CD8-positive, alpha-beta memory T cell (primary cell): ENCODE measurements at regions of chr12 and their contacts with region 1.

Region 1: DNA sequence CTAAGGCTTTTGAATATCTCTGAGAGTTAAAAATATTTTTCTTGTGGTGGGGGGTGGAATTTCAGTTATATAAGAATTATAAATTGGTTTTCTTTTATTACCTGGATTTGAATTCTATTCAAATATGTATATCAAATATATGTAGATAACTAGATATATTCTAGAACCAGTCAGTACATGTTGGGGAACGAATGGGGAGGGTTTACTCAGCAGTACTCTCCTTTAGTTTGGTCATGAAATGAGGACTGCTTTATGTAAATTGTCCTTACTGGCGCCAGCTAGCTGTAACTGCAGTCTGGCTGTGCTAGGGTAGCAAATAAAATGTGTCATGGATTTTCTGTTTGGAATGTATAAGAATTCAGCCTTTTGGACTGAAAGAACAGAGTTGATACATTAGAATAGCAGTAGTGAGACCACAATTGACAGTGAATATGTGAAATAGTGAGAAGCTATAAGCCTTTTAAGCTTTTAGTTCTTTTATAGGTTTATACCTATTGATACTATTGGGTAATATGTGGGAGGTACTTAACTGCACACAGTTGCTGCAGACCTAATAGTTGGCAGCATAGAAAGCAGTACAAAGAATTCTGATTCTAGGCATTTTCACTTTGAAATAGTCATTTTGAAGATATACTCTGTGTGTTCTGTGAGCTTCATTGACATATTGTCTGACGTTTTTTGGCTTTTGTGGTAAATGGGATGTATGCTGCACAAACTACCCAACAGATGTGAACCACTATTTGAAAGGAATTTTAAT is 29.0 kb downstream of the ATF7IP start:
- DNase-seq: peak in 3 of 5 donors; percentile 64 to 82 (median 78)
- H3K4me3 ChIP-seq: no peak overlapping the region
- H3K4me3 Mint-ChIP-seq: peak overlapping the region; percentile 71 to 91 (median 78)
- H3K27ac ChIP-seq: peak overlapping the region; percentile 29
- H3K27ac Mint-ChIP-seq: peak overlapping the region; percentile 76 to 99 (median 96)
- H3K4me1 ChIP-seq: peaks cover 94% of the 10 kb centered on the region
- H3K4me1 Mint-ChIP-seq: peaks cover 87 to 97% (median 94%) of the 10 kb centered on the region in 3 donors
- H3K27me3 ChIP-seq: no peaks in the 10 kb centered on the region
- H3K27me3 Mint-ChIP-seq: no peaks in the 10 kb centered on the region

Region 2: DNA sequence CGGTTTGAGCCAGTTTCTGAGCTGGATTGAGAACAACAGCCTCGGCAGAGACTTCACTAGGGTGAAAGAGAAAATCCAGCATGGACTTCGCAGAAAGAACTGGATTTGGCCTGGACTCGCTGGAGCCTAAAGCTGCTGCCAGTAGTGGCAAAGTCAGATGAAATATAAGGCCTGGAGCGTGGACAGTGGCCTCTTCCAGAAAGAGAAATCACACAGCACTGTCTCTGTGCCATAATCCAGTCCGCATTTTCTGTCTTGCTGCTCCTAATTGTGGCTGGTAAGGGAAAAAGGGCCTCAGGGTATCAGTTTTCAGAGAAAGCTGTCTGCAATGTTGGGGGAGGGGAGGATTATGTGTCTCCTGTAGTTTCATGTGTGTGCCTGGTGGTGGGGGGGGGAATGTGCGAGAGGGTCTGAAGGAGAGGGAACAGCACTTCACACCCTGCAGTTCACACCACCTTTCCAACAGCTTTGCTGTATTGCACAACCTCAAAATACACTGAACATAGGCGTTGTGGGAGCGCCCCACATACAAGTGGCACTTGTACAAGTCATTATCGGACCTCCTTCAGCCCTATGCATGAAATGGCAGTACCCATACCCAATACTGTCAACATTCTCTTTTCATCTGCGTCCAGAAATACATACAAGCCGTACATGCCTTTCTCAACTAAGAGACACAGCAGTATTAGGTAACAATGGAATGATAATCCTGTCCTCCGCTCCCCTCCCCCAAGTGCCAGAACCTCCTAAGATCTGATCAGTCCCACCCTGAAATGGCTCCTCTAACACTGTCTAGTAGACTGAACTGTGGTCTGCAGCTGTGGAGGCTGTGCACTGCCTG is 136.5 kb before region 1 on chr12:
- CTCF ChIA-PET with region 1: interaction called, 6 read pairs
- POLR2A ChIA-PET with region 1: interaction called, 12 read pairs
- DNase-seq: peak; percentile 69 to 79 (median 78)
- H3K4me3 ChIP-seq: peak overlapping the region; percentile 24
- H3K4me3 Mint-ChIP-seq: peak overlapping the region; percentile 54 to 86 (median 83)
- H3K27ac ChIP-seq: peak overlapping the region; percentile 69
- H3K27ac Mint-ChIP-seq: peak overlapping the region; percentile 81 to 98 (median 96)
- H3K4me1 ChIP-seq: peaks cover 38% of the 10 kb centered on the region
- H3K4me1 Mint-ChIP-seq: peaks cover 44 to 53% (median 49%) of the 10 kb centered on the region in 3 donors
- H3K27me3 ChIP-seq: no peaks in the 10 kb centered on the region
- H3K27me3 Mint-ChIP-seq: peaks cover 0 to 2% of the 10 kb centered on the region in 2 donors

Region 3: DNA sequence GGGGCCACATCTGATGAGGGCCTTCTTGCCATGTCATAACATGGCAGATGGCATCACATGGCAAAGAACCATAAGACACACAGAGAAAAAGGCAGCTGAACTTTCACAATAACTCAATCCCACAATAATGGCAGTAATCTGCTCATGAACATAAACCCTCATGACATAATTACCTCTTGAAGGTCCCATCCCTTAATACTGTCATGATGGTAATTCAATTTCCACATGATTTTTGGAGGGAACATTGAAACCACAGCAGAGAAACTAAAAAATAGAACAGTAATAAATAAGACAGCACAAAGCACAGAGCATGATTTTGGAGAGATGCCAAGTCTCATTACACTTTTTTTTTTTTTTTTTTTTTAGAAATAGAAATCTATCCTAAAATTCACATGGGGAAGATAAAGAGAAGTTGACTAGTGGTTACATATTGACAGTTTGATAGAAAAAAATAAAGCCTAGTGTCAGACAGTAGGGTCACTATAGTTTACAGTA is 90.8 kb before region 1 on chr12:
- CTCF ChIA-PET with region 1: no interaction called
- POLR2A ChIA-PET with region 1: no interaction called
- DNase-seq: no peak
- H3K4me3 ChIP-seq: no peak overlapping the region
- H3K4me3 Mint-ChIP-seq: no peak overlapping the region
- H3K27ac ChIP-seq: no peak overlapping the region
- H3K27ac Mint-ChIP-seq: no peak overlapping the region
- H3K4me1 ChIP-seq: no peaks in the 10 kb centered on the region
- H3K4me1 Mint-ChIP-seq: peaks cover 0 to 3% (median 0%) of the 10 kb centered on the region in 3 donors
- H3K27me3 ChIP-seq: no peaks in the 10 kb centered on the region
- H3K27me3 Mint-ChIP-seq: no peaks in the 10 kb centered on the region

Region 4: GRCh38 chr12:14417715-14418114 is 23.2 kb after region 1 on chr12:
- CTCF ChIA-PET with region 1: interaction called, 12 read pairs
- POLR2A ChIA-PET with region 1: interaction called, 10 read pairs
- DNase-seq: peak; percentile 51 to 85 (median 69)
- H3K4me3 ChIP-seq: no peak overlapping the region
- H3K4me3 Mint-ChIP-seq: peak overlapping the region; percentile 50 to 88 (median 85)
- H3K27ac ChIP-seq: no peak overlapping the region
- H3K27ac Mint-ChIP-seq: peak overlapping the region; percentile 23 to 97 (median 89)
- H3K4me1 ChIP-seq: peaks cover 63% of the 10 kb centered on the region
- H3K4me1 Mint-ChIP-seq: peaks cover 65 to 88% (median 84%) of the 10 kb centered on the region in 3 donors
- H3K27me3 ChIP-seq: no peaks in the 10 kb centered on the region
- H3K27me3 Mint-ChIP-seq: no peaks in the 10 kb centered on the region